ENCODE measurements at regions of chr6 and their contacts with region 1.

Region 1: GRCh38 chr6:145929037-145929633 is 35.0 kb downstream of the SHPRH start:
- DNase-seq: peak in 5 of 35 experiments; percentile 3 to 56 (median 4)
- ATAC-seq: no peak
- H3K4me3 ChIP-seq: no peak overlapping the region
- H3K4me3 Mint-ChIP-seq: no peak overlapping the region
- H3K27ac ChIP-seq: no peak overlapping the region
- H3K27ac Mint-ChIP-seq: no peak overlapping the region
- H3K4me1 ChIP-seq: no peaks in the 10 kb centered on the region
- H3K4me1 Mint-ChIP-seq: no peaks in the 10 kb centered on the region
- H3K27me3 ChIP-seq: no peaks in the 10 kb centered on the region
- H3K27me3 Mint-ChIP-seq: no peaks in the 10 kb centered on the region

Region 2: DNA sequence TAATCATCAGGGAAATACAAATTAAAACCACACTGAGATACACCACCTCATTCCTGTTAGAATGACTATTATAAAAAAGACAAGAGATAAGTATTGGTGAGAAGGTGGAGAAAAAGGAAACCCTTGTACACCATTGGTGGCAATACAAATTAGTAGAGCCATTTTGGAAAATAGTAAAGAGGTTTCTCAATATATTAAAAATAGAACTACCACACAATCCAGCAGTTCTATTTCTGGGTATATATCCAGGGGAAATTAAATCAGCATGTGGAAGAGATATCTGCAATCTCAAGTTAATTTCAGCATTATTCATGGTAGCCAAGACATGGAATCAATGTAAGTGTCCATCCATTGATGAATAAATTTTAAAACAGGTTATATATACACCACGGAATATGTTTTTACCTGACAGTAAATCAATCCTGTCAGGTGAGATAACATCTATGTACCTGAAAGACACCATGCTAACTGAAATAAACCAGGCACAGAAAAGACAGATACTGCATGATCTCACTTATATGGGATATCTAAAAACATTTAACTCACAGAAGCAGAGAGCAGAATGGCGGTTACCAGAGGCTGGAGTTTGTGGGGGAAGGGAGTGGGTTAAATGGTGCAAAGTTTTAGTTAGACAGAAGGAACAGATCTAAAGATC is 29.1 kb before region 1 on chr6:
- CTCF ChIA-PET with region 1: no interaction called
- POLR2A ChIA-PET with region 1: no interaction called
- DNase-seq: no peak
- ATAC-seq: no peak
- H3K4me3 ChIP-seq: no peak overlapping the region
- H3K4me3 Mint-ChIP-seq: no peak overlapping the region
- H3K27ac ChIP-seq: no peak overlapping the region
- H3K27ac Mint-ChIP-seq: no peak overlapping the region
- H3K4me1 ChIP-seq: no peaks in the 10 kb centered on the region
- H3K4me1 Mint-ChIP-seq: peaks cover 2 to 5% (median 5%) of the 10 kb centered on the region in 3 donors
- H3K27me3 ChIP-seq: no peaks in the 10 kb centered on the region
- H3K27me3 Mint-ChIP-seq: no peaks in the 10 kb centered on the region

Region 3: GRCh38 chr6:145963216-145964068 is 34.3 kb after region 1 on chr6:
- CTCF ChIA-PET with region 1: interaction called, 3 to 10 read pairs
- POLR2A ChIA-PET with region 1: no interaction called
- DNase-seq: peak in 32 of 35 experiments; percentile 6 to 53 (median 25)
- ATAC-seq: peak; percentile 17 to 34 (median 24)
- H3K4me3 ChIP-seq: peak overlapping the region; percentile 88 to 90
- H3K4me3 Mint-ChIP-seq: peak overlapping the region; percentile 98 to 99 (median 98)
- H3K27ac ChIP-seq: peak overlapping the region; percentile 70
- H3K27ac Mint-ChIP-seq: peak overlapping the region; percentile 75 to 98
- H3K4me1 ChIP-seq: peaks cover 11 to 14% of the 10 kb centered on the region in 2 experiments
- H3K4me1 Mint-ChIP-seq: peaks cover 57 to 61% (median 58%) of the 10 kb centered on the region in 3 donors
- H3K27me3 ChIP-seq: no peaks in the 10 kb centered on the region
- H3K27me3 Mint-ChIP-seq: no peaks in the 10 kb centered on the region

Region 4: DNA sequence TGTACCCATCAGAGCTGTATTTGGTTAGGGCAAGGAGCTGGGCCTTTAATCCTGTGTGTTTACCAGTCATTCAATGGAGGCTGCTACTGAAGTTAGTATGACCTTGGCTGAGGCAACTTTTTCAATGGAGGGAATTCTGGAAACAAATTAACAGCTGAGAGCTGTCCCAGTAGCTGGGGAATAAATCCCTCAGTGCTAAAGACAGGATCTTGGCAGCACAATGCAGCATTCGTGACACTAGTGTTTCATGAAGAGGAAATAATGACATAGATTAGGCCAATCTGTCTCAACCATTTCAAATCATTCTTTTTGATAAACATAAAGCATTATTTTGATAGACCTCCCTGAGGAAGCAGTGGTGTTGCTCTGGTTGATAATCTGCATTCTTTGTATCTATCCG is 142.6 kb after region 1 on chr6:
- CTCF ChIA-PET with region 1: no interaction called
- POLR2A ChIA-PET with region 1: no interaction called
- DNase-seq: no peak
- ATAC-seq: no peak
- H3K4me3 ChIP-seq: no peak overlapping the region
- H3K4me3 Mint-ChIP-seq: no peak overlapping the region
- H3K27ac ChIP-seq: no peak overlapping the region
- H3K27ac Mint-ChIP-seq: no peak overlapping the region
- H3K4me1 ChIP-seq: no peaks in the 10 kb centered on the region
- H3K4me1 Mint-ChIP-seq: no peaks in the 10 kb centered on the region
- H3K27me3 ChIP-seq: no peaks in the 10 kb centered on the region
- H3K27me3 Mint-ChIP-seq: no peaks in the 10 kb centered on the region

Measured in T-cell (primary cell).